BJ (cell line): ENCODE measurements at regions of chr21 and their contacts with region 1.

Region 1: GRCh38 chr21:39137248-39138178 is 45.7 kb downstream of the PSMG1 start:
- DNase-seq: no peak
- H3K4me3 ChIP-seq: no peak overlapping the region
- H3K27me3 ChIP-seq: peaks cover 2% of the 10 kb centered on the region; the same call in 1 of the 2 replicates
- CTCF ChIP-seq: peak; percentile 32; the same call in 1 of the 2 replicates

Region 2: DNA sequence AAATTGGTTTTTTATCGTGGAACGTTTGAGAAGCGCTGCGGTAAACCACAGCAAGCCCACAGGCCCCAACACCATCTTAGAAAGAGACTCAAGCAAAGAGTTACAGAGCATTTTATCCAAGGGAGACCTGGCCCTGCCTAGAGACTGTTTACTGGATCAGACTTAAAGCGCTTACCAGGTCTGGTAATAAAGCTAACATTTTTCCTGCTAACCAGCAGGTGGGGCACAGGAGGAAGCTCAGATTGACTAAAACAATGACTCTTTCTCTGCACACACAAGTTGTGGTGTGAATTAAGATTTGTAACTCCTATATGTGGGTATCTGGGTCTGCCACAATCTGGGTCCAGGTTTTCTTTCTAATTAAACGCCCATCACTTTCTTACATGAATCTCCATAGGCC is 468.3 kb before region 1 on chr21:
- CTCF ChIA-PET with region 1: interaction called, 39 read pairs
- POLR2A ChIA-PET with region 1: no interaction called
- DNase-seq: no peak
- H3K4me3 ChIP-seq: no peak overlapping the region
- H3K27me3 ChIP-seq: peaks cover 40% of the 10 kb centered on the region
- CTCF ChIP-seq: peak; percentile 66

Region 3: DNA sequence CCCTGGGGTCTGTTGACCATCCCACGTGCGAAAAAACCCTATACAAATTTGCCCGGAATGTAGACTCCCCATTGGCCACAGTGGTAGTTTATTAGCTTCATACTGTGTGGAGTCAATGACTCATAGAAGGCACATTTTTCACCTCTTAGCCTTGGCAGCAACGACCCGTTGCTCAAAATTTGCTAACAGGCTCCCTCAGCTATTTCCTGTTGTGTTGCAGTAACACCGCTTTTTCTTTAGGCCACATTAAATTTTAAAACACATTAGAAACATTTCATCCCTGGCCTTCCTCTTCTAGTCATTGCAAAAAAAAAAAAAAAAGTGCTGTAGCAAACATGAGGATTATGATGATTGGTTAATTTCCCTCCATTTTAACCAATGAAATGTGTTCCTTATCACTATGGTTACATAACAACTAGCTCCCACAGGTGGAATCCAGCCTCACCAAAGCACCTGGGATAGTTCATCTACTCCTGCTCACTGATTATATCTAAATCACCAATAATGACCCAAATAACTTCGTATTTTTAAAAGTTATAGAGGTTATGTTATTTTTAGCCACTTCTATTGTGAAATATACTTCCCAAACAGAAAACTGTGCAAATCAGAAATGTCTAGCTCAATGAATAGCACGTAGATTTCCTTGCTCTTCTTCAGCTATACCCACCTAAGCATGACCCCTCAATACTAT is 381.7 kb before region 1 on chr21:
- CTCF ChIA-PET with region 1: interaction called, 10 read pairs
- POLR2A ChIA-PET with region 1: no interaction called
- DNase-seq: peak; percentile 95
- H3K4me3 ChIP-seq: no peak overlapping the region
- H3K27me3 ChIP-seq: no peaks in the 10 kb centered on the region
- CTCF ChIP-seq: no peak

Region 4: DNA sequence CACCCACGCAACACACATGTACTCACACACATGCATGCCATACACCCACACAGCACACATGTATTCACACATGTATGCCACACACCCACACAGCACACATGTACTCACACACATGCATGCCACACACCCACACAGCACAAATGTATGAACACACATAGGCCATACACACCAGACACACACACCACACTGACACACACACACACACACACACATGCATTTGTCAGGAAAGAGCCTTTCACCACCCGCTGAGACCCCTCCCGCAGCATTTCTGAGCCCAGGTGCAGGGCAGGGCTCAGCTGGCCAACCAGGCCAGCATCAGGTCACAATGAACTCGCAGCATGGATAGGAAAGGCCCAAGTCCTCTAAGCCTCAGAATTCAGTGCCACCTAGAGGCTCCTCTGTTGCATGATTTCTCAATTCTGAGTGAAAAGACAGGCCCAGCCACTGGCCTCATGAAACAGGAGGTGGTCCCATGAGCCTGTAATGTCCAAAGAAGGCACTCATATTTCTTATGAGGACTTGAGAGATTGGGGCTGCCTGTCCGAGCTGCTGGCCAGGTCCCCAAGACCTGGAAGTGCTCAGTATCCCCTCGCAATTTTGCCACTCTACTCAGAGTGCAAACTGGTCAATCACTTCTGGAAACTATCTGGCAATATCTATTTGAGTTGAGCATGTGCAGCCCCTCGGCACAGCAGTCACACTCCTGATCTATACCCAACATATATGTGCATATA is 11.6 kb before region 1 on chr21:
- CTCF ChIA-PET with region 1: interaction called, 24 read pairs
- POLR2A ChIA-PET with region 1: no interaction called
- DNase-seq: no peak
- H3K4me3 ChIP-seq: no peak overlapping the region
- H3K27me3 ChIP-seq: no peaks in the 10 kb centered on the region; the same call in 1 of the 2 replicates
- CTCF ChIP-seq: peak; percentile 73

Region 5: GRCh38 chr21:39422527-39423241 is 285.2 kb after region 1 on chr21:
- CTCF ChIA-PET with region 1: no interaction called
- POLR2A ChIA-PET with region 1: no interaction called
- DNase-seq: no peak
- H3K4me3 ChIP-seq: no peak overlapping the region
- H3K27me3 ChIP-seq: no peaks in the 10 kb centered on the region
- CTCF ChIP-seq: no peak